Transverse colon (tissue), 4 donors: ENCODE measurements at regions of chr1 and their contacts with region 1.

Region 1: DNA sequence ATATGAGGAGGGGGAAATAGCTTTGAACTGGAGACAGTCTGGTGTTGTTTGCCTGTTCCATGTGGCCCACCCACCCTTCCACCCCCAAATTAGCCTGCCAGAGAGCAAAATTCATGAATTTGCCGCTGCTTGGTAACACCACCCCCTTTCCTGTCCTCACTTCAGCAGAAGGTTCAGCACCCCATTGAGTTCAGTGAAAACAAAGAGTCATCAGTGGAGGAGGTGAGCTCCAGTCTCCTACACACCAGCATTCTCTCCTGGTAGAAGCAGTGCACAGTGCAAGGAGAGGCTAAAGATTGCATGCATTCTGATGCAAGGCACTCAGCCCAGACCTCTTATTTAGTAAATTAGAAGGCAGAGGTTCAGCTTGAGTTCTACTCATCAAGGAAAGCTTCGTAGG is 99.7 kb upstream of the DYNLT5 start:
- DNase-seq: no peak
- H3K4me3 ChIP-seq: no peak overlapping the region
- H3K27ac ChIP-seq: no peak overlapping the region
- H3K4me1 ChIP-seq: no peaks in the 10 kb centered on the region
- H3K27me3 ChIP-seq: no peaks in the 10 kb centered on the region
- CTCF ChIP-seq: no peak
- EP300 ChIP-seq: no peak
- POLR2A ChIP-seq: no peak

Region 2: DNA sequence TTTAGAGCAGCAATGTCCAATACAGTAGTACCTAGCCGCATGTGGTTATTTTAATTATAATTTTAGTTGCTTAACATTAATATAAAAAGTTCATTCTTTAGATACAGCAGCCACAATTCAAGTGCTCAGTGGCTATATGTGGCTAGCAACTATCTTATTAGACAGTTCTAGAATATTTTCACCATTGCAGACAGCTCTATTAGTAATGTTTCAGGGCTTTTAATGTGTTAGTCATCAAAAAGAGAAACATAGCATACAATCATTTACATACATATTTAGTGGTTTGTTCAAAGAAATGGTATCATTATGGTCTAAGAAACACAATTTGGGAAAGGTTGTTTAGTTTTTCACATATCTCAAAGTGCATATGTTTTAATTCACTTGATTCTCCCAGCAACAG is 33.1 kb after region 1 on chr1:
- in situ Hi-C with region 1: no loop called
- intact Hi-C with region 1: loop called (anchors 1 kb)
- DNase-seq: no peak
- H3K4me3 ChIP-seq: no peak overlapping the region
- H3K27ac ChIP-seq: no peak overlapping the region
- H3K4me1 ChIP-seq: no peaks in the 10 kb centered on the region
- H3K27me3 ChIP-seq: no peaks in the 10 kb centered on the region
- CTCF ChIP-seq: no peak
- EP300 ChIP-seq: no peak
- POLR2A ChIP-seq: no peak

Region 3: GRCh38 chr1:67013573-67013972 is 361.0 kb after region 1 on chr1:
- in situ Hi-C with region 1: no loop called
- intact Hi-C with region 1: no loop called
- DNase-seq: no peak
- H3K4me3 ChIP-seq: no peak overlapping the region
- H3K27ac ChIP-seq: no peak overlapping the region
- H3K4me1 ChIP-seq: peaks cover 0 to 4% (median 0%) of the 10 kb centered on the region in 4 donors
- H3K27me3 ChIP-seq: no peaks in the 10 kb centered on the region
- CTCF ChIP-seq: no peak
- EP300 ChIP-seq: no peak
- POLR2A ChIP-seq: no peak